ENCODE measurements at regions of chr4 and their contacts with region 1.

Region 1: GRCh38 chr4:7661846-7662506 is 227.2 kb upstream of the PSAPL1 start:
- DNase-seq: no peak
- H3K4me3 ChIP-seq: no peak overlapping the region
- H3K27ac ChIP-seq: no peak overlapping the region
- H3K4me1 ChIP-seq: no peaks in the 10 kb centered on the region
- H3K27me3 ChIP-seq: no peaks in the 10 kb centered on the region
- CTCF ChIP-seq: no peak

Region 2: DNA sequence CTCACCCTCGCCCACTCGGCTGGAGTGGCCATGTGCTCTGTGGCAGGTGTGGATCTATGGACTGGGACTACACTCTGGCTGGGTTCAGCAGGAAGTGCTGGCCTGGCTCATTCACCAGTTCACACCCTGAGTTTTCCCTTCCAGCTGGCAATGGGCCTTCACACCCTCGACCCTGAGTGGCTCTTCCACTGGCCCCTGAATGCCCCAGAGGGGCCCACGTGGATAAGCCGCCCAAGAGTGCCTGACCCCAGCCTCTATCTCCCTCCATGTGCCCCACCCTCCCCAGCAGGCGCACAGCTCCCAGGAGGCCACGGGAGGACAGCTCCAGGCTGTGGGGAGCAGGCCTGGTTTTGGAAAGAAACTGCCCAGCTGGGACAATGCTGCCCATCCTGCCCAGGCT is 43.6 kb after region 1 on chr4:
- CTCF ChIA-PET with region 1: no interaction called
- POLR2A ChIA-PET with region 1: interaction called, 11 read pairs
- intact Hi-C with region 1: no loop called
- DNase-seq: no peak
- H3K4me3 ChIP-seq: no peak overlapping the region
- H3K27ac ChIP-seq: no peak overlapping the region
- H3K4me1 ChIP-seq: no peaks in the 10 kb centered on the region
- H3K27me3 ChIP-seq: no peaks in the 10 kb centered on the region
- CTCF ChIP-seq: no peak